ENCODE measurements at regions of chr2 and their contacts with region 1.

Region 1: DNA sequence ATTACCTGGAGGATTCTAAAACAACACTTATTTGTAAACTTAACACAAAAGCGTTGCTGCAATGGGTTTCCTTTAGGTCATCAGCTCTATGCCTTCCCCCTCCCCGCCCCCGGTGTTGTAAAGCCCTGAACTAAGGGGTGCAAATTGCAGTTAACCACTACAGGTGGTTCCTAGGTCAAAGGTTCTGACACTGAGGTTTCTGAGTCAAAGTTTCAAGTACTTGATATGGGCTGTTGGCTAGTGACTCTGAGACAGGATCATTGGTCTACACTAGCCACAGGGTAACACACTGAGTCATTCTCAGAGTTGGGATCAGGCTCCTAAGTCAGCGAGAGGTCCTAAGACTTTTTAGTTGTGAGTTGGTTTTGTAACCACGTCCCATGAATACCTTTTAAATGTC is 15.4 kb downstream of the IL1B start:
- DNase-seq: no peak
- ATAC-seq: no peak
- H3K4me3 ChIP-seq: no peak overlapping the region
- H3K27ac ChIP-seq: no peak overlapping the region
- H3K4me1 ChIP-seq: peaks cover 7 to 9% of the 10 kb centered on the region in 2 experiments; a peak in 3 of 4 replicates
- H3K27me3 ChIP-seq: no peaks in the 10 kb centered on the region
- CTCF ChIP-seq: no peak
- POLR2A ChIP-seq: no peak
- RAD21 ChIP-seq: no peak

Region 2: DNA sequence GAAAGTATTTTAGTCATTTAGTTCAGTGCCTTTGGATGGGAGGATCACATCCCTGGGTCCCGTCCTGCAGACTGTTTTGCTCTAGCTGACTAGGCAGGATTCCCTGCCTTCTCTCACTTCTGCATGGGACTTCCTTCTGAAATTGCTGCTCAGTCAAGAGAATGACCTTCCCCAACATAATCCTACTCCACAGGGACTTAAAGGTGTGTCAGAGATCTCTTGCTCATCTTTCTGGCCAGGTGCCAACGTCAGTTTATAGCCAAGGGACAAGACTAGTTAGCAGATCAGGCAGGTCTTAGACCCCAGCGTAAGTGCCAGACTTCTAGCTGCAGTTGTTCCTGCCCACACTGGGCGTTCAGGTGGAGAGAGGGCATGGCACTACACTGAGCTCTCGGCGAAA is 24.9 kb after region 1 on chr2:
- CTCF ChIA-PET with region 1: no interaction called
- POLR2A ChIA-PET with region 1: no interaction called
- RAD21 ChIA-PET with region 1: no interaction called
- intact Hi-C with region 1: loop called (anchors 1 kb)
- DNase-seq: no peak
- ATAC-seq: no peak
- H3K4me3 ChIP-seq: no peak overlapping the region
- H3K27ac ChIP-seq: no peak overlapping the region
- H3K4me1 ChIP-seq: no peaks in the 10 kb centered on the region
- H3K27me3 ChIP-seq: peaks cover 7% of the 10 kb centered on the region; the same call in 1 of the 2 replicates
- CTCF ChIP-seq: no peak
- POLR2A ChIP-seq: no peak
- RAD21 ChIP-seq: no peak

Region 3: DNA sequence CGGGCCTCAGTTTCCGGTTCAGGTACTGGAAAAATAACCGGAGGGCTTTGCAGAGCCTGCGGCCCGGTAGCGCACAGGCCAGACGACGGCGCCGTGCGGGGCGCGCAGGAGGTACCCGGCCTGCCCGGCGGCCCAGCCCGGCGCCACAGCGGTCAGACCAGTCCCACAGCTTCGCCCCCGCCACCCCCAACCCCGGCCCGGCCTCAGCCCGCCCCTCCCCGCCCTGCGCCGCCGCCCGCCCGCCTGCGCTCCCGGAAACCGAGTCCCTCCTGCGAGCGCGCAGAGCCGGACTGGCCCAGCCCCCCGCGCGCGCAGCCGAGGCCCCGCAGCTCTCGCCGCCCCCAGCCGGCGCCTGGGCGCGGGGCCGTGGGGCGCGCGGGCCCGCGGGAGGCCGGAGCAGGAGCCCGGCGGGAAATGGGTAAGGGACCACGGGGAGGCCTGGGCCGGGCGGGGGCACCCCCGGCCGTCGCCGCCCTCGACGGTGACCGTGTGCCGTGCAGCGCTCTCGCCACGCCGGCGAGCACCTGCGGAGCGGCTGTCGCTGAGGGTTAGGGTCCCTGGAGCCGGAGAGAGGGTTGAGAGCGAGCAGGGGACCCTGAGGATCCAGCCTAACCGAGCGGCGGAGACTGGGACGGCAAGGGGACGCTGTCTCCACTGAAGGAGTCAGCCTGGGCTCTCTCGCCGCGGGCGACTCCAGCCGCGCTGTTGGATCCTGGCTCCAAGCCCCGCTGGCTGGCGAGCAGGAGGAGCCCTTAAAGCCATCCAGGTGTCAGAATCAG is 336.2 kb after region 1 on chr2:
- CTCF ChIA-PET with region 1: no interaction called
- POLR2A ChIA-PET with region 1: no interaction called
- RAD21 ChIA-PET with region 1: no interaction called
- intact Hi-C with region 1: no loop called
- DNase-seq: no peak
- ATAC-seq: peak; percentile 84
- H3K4me3 ChIP-seq: peak overlapping the region; percentile 66 to 74
- H3K27ac ChIP-seq: peak overlapping the region; percentile 80
- H3K4me1 ChIP-seq: peaks cover 22 to 35% of the 10 kb centered on the region in 2 experiments; a peak in 3 of 4 replicates
- H3K27me3 ChIP-seq: no peaks in the 10 kb centered on the region
- CTCF ChIP-seq: no peak
- POLR2A ChIP-seq: no peak
- RAD21 ChIP-seq: no peak